Heart right ventricle (tissue), 16 donors: ENCODE measurements at regions of chr1 and their contacts with region 1.

Region 1: DNA sequence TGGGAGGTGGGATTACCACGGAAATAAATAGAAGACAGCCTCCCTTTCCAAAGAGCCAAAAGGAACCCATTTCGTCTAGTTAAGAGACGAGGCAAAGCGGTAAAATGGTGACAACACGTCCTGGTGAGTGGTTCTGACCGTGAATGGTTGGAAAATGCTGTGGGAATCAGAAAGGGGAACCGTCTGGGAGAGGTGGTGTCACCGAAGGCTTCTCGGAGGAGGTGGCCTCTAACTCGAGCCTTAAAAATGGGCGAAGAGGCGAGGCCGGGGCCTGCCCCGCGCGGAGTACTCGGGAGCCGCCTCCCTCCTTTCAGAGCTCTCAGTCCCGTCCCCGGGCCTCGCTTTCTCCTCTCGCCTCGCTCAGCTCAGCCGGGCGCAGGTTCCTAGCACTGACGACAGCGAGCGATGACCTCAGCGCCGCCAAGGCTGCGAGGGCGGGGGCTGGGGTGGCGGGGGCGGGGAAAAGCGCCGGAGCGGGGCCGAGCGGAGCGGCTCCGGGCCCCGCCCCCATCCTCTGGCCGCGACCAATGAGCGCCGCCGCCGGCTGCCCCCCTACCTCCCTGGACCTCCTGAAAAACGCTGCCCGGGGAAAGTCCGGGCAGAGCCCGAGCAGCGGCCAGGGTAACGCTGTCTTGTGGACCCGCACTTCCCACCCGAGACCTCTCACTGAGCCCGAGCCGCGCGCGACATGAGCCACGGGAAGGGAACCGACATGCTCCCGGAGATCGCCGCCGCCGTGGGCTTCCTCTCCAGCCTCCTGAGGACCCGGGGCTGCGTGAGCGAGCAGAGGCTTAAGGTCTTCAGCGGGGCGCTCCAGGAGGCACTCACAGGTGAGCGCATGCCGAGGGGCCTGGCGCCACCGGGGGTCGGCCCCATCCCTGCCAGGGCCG is at the start of gene BTG2:
- DNase-seq: peak; percentile 94
- ATAC-seq: peak; percentile 88 to 95 (median 94)
- H3K4me3 ChIP-seq: peak within 1 kb of the TSS; percentile 73 to 100 (median 96)
- H3K27ac ChIP-seq: peak within 1 kb of the TSS; percentile 91 to 100 (median 99)
- H3K4me1 ChIP-seq: peaks cover 9 to 57% (median 43%) of the 10 kb centered on the region in 9 donors
- H3K27me3 ChIP-seq: no peaks in the 10 kb centered on the region
- CTCF ChIP-seq: no peak
- total RNA-seq, gene BTG2: 26.4 to 349 (median 58.9) TPM

Region 2: DNA sequence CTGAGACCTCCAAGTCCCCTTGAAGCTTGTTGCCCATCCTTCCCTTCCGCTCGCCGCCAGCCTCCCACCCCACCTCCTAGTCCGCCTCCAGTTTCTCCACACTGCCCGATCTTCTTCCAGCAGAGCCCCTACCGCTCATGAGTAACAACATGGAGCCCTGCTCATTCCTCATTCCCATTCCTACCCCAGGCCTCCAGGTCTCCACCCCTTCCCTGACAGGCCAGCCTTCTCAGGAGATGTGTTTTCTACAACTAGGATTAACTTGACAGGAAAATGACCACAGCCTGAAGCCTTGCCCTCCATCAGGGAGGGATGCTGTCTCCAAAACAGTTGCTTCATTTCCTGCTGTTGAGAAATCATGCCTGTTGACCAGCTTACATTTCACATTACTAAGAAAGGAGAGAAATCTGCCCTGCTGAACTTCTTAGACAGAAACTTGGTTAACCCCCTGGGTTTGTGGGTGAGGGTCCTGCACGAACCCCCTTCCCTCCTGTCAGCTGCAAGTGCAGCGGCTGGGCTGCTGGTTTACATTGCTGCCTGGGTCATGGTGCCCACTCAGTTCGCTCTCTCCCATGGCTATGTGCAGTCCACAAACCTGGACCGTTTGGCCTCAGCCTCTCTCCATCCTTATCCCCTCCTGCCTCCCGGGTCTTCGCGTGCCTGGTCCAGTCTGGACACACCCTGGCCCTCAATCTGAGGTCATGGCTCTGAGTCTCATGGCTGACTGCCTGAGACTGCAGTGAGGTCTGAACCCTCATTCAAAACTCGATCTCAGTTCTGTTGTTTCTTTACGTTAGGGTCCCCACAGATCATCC is 102.5 kb before region 1 on chr1:
- intact Hi-C with region 1: no loop called
- DNase-seq: peak; percentile 18 to 43
- ATAC-seq: peak; percentile 48 to 82 (median 68)
- H3K4me3 ChIP-seq: no peak overlapping the region
- H3K27ac ChIP-seq: peak overlapping the region in 7 of 10 donors; percentile 4 to 74 (median 57)
- H3K4me1 ChIP-seq: peaks cover 0 to 46% (median 16%) of the 10 kb centered on the region in 9 donors
- H3K27me3 ChIP-seq: peaks cover 0 to 3% (median 0%) of the 10 kb centered on the region in 7 donors
- CTCF ChIP-seq: no peak

Region 3: DNA sequence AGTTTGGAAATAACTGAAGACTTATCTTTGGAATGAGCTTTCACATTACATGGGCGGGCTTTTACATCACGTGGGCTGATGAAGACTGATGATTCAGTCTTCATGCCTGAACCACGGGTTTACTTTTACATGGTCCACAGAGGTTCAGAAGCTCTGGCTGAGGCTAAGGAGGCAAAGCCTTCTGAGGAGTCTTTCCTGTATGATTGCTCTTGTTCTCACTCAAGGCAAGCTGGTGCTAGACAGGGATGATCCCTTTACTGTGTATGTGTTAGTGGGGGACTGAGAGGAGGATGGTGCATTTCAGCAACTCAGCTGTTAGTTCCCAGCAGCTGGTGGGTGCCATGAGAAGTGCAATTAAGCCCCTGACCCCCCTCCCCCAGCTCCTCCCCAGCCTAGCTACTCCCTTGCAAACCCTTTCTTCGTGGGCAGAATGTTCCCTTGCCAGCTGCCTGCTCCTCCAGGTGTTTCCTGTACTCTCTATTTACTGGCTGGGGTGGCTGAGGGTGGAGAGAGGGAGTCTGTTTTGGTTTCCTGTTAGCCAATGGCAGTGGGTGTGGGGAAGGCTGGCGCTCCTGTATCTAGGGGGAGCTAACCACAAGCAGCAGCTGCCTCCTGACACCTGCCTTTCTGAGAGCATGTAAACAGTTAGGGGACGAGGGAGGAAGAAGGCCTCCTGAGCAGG is 15.6 kb after region 1 on chr1:
- intact Hi-C with region 1: loop called in 3 of 10 experiments (anchors 1 to 2 kb)
- DNase-seq: peak in 1 of 2 donors; percentile 49
- ATAC-seq: peak in 5 of 8 donors; percentile 17 to 40 (median 23)
- H3K4me3 ChIP-seq: no peak overlapping the region
- H3K27ac ChIP-seq: peak overlapping the region in 9 of 10 donors; percentile 1 to 98 (median 91)
- H3K4me1 ChIP-seq: peaks cover 27 to 74% (median 61%) of the 10 kb centered on the region in 9 donors
- H3K27me3 ChIP-seq: no peaks in the 10 kb centered on the region
- CTCF ChIP-seq: no peak

Region 4: GRCh38 chr1:203326830-203327683 is 21.9 kb after region 1 on chr1:
- intact Hi-C with region 1: loop called in 3 of 10 experiments (anchors 1 to 2 kb)
- DNase-seq: peak; percentile 95
- ATAC-seq: peak; percentile 89 to 96 (median 92)
- H3K4me3 ChIP-seq: peak overlapping the region; percentile 5 to 63 (median 57)
- H3K27ac ChIP-seq: peak overlapping the region; percentile 85 to 98 (median 94)
- H3K4me1 ChIP-seq: peaks cover 24 to 64% (median 59%) of the 10 kb centered on the region in 9 donors
- H3K27me3 ChIP-seq: no peaks in the 10 kb centered on the region
- CTCF ChIP-seq: no peak